PC-9 (cell line): ENCODE measurements at regions of chr15 and their contacts with region 1.

Region 1: DNA sequence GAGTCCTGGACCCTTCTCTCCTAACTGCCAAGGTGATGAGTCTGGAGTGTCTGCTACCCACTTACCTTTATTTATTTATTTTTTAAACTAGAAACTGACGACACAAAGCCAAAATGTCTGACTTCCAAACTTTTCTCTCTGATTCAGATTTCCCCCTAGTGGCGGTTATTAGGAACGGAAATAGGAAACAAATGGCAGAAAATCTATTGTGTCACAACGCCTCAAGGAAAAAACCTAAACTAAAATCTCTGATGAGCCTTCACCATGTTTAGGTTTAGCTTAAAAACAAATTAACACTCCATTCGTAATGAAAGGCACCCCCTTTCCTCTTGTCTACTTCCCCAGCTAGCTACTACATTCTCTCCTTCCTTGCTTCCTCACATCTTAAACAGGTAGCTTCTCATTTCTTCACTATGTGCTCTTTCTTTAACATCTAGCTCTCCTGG is 94.0 kb upstream of the MEX3B start:
- DNase-seq: no peak
- H3K4me3 ChIP-seq: no peak overlapping the region
- H3K27ac ChIP-seq: no peak overlapping the region
- H3K4me1 ChIP-seq: peaks cover 15% of the 10 kb centered on the region; the same call in 1 of the 2 replicates
- H3K27me3 ChIP-seq: no peaks in the 10 kb centered on the region
- CTCF ChIP-seq: peak; percentile 69

Region 2: DNA sequence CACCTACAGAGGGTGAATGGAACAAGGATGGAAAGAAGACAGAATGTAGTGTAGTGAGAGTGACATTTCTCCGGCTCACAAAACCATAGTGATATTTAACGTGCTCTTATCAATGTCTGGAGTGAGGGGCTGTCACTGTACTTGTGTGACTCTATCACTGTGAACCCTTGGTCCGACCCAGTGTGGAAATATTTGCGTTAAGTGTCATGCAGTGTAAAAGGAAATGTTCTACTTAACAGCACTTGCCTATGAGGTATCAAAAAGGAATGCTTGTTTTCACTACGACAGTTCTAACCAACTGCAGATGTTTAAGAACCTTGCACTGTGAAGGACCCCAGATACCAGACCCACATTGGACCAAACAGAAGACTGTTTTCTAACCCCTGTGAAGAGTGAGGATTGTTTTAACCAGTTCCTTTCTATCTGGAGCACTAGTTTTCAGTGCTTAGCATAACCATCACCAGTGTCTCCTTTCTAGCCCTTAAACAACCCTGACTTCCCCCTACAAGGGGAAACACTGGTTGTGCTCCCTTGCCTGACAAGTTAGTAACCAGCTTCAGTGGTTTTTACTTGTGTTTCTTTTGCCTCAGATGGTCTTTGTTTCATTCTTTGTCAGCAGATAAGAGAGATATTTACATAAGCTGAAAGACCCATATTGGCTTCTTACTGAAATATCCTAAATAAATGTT is 1589.5 kb before region 1 on chr15:
- CTCF ChIA-PET with region 1: no interaction called
- POLR2A ChIA-PET with region 1: no interaction called
- intact Hi-C with region 1: loop called (anchors 10 kb)
- DNase-seq: peak; percentile 22 to 77
- H3K4me3 ChIP-seq: no peak overlapping the region
- H3K27ac ChIP-seq: no peak overlapping the region
- H3K4me1 ChIP-seq: peaks cover 18% of the 10 kb centered on the region
- H3K27me3 ChIP-seq: no peaks in the 10 kb centered on the region
- CTCF ChIP-seq: no peak

Region 3: DNA sequence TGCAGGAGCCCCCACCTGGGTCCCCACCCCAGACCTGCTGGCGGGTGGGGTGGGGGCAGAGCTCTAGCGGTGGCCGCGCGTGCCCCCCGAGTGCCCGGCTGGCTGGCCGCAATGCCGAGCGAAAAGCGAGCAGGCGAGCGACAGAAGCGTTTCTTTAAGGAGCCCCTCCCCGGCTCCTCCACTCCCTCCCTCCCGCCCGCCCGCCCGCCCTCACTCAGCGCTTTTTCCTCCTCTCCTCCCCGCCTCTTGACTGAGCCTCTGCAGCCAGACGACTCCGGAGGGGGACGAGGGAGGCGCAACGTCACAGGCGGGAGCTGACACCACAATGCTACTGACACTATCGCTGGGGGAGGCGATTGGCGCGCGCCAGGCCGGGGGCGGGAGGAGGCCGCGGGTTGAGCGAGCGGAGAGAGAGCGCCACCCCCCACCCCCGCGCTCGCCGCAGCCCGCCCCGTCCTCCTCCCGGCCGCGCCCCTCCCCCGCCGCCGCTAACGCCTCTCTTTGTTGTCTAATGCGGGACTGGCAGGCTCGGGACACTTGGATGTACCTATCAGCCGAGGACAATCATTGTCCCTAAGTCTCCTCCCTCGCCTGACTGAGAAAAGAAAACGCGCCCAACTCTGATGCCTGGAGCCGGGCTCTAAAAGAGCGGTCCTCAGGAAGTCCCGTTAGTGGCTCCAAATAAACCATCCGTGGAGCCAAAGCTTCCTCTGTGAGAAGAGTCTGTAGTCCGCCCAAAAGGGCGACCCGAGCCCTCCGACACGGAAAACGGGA is 93.8 kb before region 1 on chr15 and contains the start of gene MEX3B:
- CTCF ChIA-PET with region 1: no interaction called
- POLR2A ChIA-PET with region 1: no interaction called
- intact Hi-C with region 1: no loop called
- DNase-seq: peak; percentile 46 to 60
- H3K4me3 ChIP-seq: peak within 1 kb of the TSS; percentile 81
- H3K27ac ChIP-seq: no peak within 1 kb of the TSS
- H3K4me1 ChIP-seq: no peaks in the 10 kb centered on the region
- H3K27me3 ChIP-seq: peaks cover 26% of the 10 kb centered on the region
- CTCF ChIP-seq: no peak
- total RNA-seq, gene MEX3B: not detected in 2 replicates

Region 4: GRCh38 chr15:82108489-82109078 is 31.3 kb before region 1 on chr15:
- CTCF ChIA-PET with region 1: interaction called, 10 read pairs
- POLR2A ChIA-PET with region 1: no interaction called
- intact Hi-C with region 1: no loop called
- DNase-seq: peak in 1 of 2 experiments; percentile 79
- H3K4me3 ChIP-seq: no peak overlapping the region
- H3K27ac ChIP-seq: no peak overlapping the region
- H3K4me1 ChIP-seq: no peaks in the 10 kb centered on the region
- H3K27me3 ChIP-seq: no peaks in the 10 kb centered on the region
- CTCF ChIP-seq: peak; percentile 91

Region 5: GRCh38 chr15:82183121-82184033 is 43.5 kb after region 1 on chr15:
- CTCF ChIA-PET with region 1: interaction called, 10 read pairs
- POLR2A ChIA-PET with region 1: no interaction called
- intact Hi-C with region 1: no loop called
- DNase-seq: no peak
- H3K4me3 ChIP-seq: no peak overlapping the region
- H3K27ac ChIP-seq: no peak overlapping the region
- H3K4me1 ChIP-seq: no peaks in the 10 kb centered on the region
- H3K27me3 ChIP-seq: no peaks in the 10 kb centered on the region
- CTCF ChIP-seq: no peak